IMR-90 (cell line): ENCODE measurements at regions of chr17 and their contacts with region 1.

Region 1: DNA sequence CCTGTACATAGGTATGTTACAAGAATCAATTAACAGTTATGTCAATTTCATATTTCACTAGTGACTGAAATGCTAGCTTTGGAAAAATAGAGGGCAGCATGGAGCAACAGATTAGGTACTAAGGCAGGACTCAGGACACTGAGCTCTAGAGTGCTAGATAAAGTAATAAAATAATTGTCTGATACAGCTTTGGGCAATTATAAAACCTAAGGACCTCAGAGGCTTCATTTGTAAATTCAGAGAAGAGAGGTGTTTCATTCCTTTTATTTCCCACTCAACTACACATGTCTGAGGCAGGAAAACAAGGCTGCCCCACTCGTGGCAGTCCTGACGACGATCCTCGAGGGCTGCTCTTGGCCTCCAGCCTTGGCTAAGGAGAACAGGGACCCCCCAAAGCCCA is 81.5 kb downstream of the CA4 start:
- DNase-seq: peak; percentile 39
- ATAC-seq: peak; percentile 73
- H3K4me3 ChIP-seq: no peak overlapping the region
- H3K27ac ChIP-seq: no peak overlapping the region
- H3K4me1 ChIP-seq: peaks cover 2% of the 10 kb centered on the region; the same call in 1 of the 2 replicates
- H3K27me3 ChIP-seq: no peaks in the 10 kb centered on the region
- CTCF ChIP-seq: peak; percentile 56
- POLR2A ChIP-seq: no peak
- RAD21 ChIP-seq: peak; percentile 58

Region 2: GRCh38 chr17:60077672-60078519 is 153.3 kb before region 1 on chr17:
- CTCF ChIA-PET with region 1: no interaction called
- POLR2A ChIA-PET with region 1: no interaction called
- dilution Hi-C with region 1: no loop called
- in situ Hi-C with region 1: no loop called
- intact Hi-C with region 1: no loop called
- DNase-seq: no peak
- ATAC-seq: peak; percentile 15
- H3K4me3 ChIP-seq: peak overlapping the region; percentile 96
- H3K27ac ChIP-seq: peak overlapping the region; percentile 100
- H3K4me1 ChIP-seq: peaks cover 17% of the 10 kb centered on the region
- H3K27me3 ChIP-seq: no peaks in the 10 kb centered on the region
- CTCF ChIP-seq: no peak
- POLR2A ChIP-seq: no peak
- RAD21 ChIP-seq: no peak

Region 3: GRCh38 chr17:60284709-60285108 is 53.5 kb after region 1 on chr17:
- CTCF ChIA-PET with region 1: no interaction called
- POLR2A ChIA-PET with region 1: no interaction called
- dilution Hi-C with region 1: no loop called
- in situ Hi-C with region 1: no loop called
- intact Hi-C with region 1: no loop called
- DNase-seq: no peak
- ATAC-seq: no peak
- H3K4me3 ChIP-seq: no peak overlapping the region
- H3K27ac ChIP-seq: no peak overlapping the region
- H3K4me1 ChIP-seq: no peaks in the 10 kb centered on the region
- H3K27me3 ChIP-seq: no peaks in the 10 kb centered on the region
- CTCF ChIP-seq: no peak
- POLR2A ChIP-seq: no peak
- RAD21 ChIP-seq: no peak

Region 4: GRCh38 chr17:60435244-60436167 is 204.3 kb after region 1 on chr17:
- CTCF ChIA-PET with region 1: no interaction called
- POLR2A ChIA-PET with region 1: no interaction called
- dilution Hi-C with region 1: no loop called
- in situ Hi-C with region 1: no loop called
- intact Hi-C with region 1: loop called (anchors 2 kb)
- DNase-seq: peak; percentile 89
- ATAC-seq: peak; percentile 93
- H3K4me3 ChIP-seq: no peak overlapping the region
- H3K27ac ChIP-seq: peak overlapping the region; percentile 49; the same call in 1 of the 2 replicates
- H3K4me1 ChIP-seq: peaks cover 3% of the 10 kb centered on the region
- H3K27me3 ChIP-seq: no peaks in the 10 kb centered on the region
- CTCF ChIP-seq: peak; percentile 98
- POLR2A ChIP-seq: peak; percentile 49; the same call in 1 of the 2 replicates
- RAD21 ChIP-seq: peak; percentile 97

Region 5: DNA sequence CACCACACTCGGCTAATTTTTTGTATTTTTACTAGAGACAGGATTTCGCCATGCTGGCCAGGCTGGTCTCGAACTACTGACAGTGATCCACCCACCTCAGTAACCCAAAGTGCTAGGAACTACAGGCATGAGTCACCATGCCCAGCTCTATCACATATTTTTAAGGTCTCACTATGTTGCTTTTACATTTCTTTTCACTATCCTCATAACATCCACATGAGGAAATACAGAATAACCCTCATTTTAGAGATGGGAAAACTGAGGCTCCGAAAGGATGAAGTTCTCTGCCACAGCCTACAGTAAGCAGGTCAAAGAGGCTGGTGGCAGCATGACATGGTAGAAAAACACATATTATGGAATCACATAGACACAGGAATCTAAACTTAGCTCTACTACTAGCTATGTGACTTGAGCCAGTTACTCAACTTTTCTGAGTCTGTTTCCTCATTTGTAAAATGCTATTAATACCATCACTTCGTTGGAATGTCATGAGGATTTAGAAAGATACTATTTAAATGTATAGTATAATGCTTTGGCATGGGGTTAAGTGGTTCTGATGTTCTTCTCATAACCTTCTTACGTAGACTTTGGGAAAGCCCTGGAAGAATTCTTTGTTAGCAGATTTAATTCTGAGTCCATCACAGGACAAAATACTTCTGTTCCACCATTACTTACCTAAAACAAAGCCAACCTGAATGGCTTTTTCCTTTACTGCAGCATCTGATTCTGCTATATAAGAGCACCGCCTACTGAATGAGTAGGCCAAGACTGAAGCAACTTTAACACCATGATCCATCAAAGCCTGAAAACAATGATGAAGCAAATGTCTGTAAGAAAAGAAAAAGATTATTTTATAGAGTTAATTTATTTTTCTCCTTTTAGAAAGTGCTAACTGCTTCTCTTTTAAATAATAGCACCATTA is 262.8 kb after region 1 on chr17:
- CTCF ChIA-PET with region 1: no interaction called
- POLR2A ChIA-PET with region 1: no interaction called
- dilution Hi-C with region 1: no loop called
- in situ Hi-C with region 1: no loop called
- intact Hi-C with region 1: no loop called
- DNase-seq: peak; percentile 60
- ATAC-seq: peak; percentile 53
- H3K4me3 ChIP-seq: no peak overlapping the region
- H3K27ac ChIP-seq: no peak overlapping the region
- H3K4me1 ChIP-seq: peaks cover 2% of the 10 kb centered on the region; the same call in 1 of the 2 replicates
- H3K27me3 ChIP-seq: no peaks in the 10 kb centered on the region
- CTCF ChIP-seq: no peak
- POLR2A ChIP-seq: no peak
- RAD21 ChIP-seq: no peak